Mammary epithelial cell (primary cell): ENCODE measurements at regions of chr15 and their contacts with region 1.

Region 1: GRCh38 chr15:39631357-39631756 is 50.5 kb downstream of the THBS1 start:
- DNase-seq: peak; percentile 79
- H3K4me3 ChIP-seq: no peak overlapping the region
- H3K27ac ChIP-seq: peak overlapping the region; percentile 49
- H3K4me1 ChIP-seq: peaks cover 31% of the 10 kb centered on the region
- H3K27me3 ChIP-seq: no peaks in the 10 kb centered on the region
- CTCF ChIP-seq: peak in 1 of 2 donors; percentile 39

Region 2: DNA sequence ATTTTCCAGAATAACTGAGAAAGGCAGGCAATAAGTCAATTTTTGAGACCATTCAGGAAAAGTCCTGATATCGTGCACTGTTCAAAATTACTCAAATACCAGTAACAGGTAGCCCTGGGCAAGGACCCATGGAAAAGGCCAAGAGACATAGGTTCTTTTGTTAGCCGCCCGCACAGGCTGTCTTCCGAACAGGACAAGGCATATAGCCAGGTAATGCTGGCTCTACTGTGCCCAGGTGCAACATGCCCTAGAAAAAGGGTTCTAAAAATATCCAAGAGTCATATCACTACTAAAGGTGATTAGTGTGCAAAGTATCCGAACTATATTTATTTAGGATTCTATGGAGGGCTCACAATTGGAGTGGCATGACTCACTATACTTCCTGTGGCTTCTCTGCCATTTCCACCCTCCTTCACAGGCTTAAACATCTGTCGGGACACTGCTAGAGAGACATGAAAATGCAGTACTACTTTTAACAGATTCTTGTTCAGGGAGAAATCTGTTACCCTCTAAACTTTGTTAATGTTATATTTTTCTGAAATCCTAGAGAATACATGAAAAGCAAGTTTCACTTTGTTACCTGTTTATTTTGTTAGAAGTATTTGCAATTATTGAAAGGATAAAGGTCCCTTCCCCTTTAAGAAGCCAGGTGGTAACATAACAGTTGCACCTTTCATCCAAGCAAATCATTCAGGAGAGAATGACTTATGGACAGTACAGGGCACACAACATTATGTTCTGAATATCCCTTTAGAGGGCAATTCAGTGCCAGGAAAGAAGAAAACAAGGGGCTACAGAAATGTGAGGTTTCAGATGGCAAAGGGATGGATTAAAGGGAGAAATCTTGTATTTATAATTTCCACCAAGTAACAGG is 343.8 kb before region 1 on chr15:
- CTCF ChIA-PET with region 1: no interaction called
- dilution Hi-C with region 1: no loop called
- in situ Hi-C with region 1: no loop called
- intact Hi-C with region 1: no loop called
- DNase-seq: peak; percentile 84
- H3K4me3 ChIP-seq: peak overlapping the region in 1 of 3 experiments; percentile 0
- H3K27ac ChIP-seq: peak overlapping the region; percentile 72
- H3K4me1 ChIP-seq: peaks cover 35% of the 10 kb centered on the region
- H3K27me3 ChIP-seq: no peaks in the 10 kb centered on the region
- CTCF ChIP-seq: no peak

Region 3: GRCh38 chr15:39592500-39592899 is 38.9 kb before region 1 on chr15:
- CTCF ChIA-PET with region 1: no interaction called
- dilution Hi-C with region 1: no loop called
- in situ Hi-C with region 1: no loop called
- intact Hi-C with region 1: loop called (anchors 2 kb)
- DNase-seq: peak; percentile 39
- H3K4me3 ChIP-seq: no peak overlapping the region
- H3K27ac ChIP-seq: peak overlapping the region; percentile 5
- H3K4me1 ChIP-seq: peaks cover 17% of the 10 kb centered on the region
- H3K27me3 ChIP-seq: no peaks in the 10 kb centered on the region
- CTCF ChIP-seq: no peak

Region 4: GRCh38 chr15:39680868-39681267 is 49.5 kb after region 1 on chr15:
- CTCF ChIA-PET with region 1: interaction called, 6 read pairs
- dilution Hi-C with region 1: loop called (anchors 5 kb)
- in situ Hi-C with region 1: no loop called
- intact Hi-C with region 1: loop called (anchors 10 kb)
- DNase-seq: no peak
- H3K4me3 ChIP-seq: no peak overlapping the region
- H3K27ac ChIP-seq: no peak overlapping the region
- H3K4me1 ChIP-seq: no peaks in the 10 kb centered on the region
- H3K27me3 ChIP-seq: no peaks in the 10 kb centered on the region
- CTCF ChIP-seq: no peak

Region 5: GRCh38 chr15:41133454-41133853 is 1502.1 kb after region 1 on chr15:
- CTCF ChIA-PET with region 1: no interaction called
- dilution Hi-C with region 1: no loop called
- in situ Hi-C with region 1: no loop called
- intact Hi-C with region 1: no loop called
- DNase-seq: no peak
- H3K4me3 ChIP-seq: no peak overlapping the region
- H3K27ac ChIP-seq: no peak overlapping the region
- H3K4me1 ChIP-seq: no peaks in the 10 kb centered on the region
- H3K27me3 ChIP-seq: no peaks in the 10 kb centered on the region
- CTCF ChIP-seq: no peak